CD4-positive, alpha-beta T cell (primary cell): ENCODE measurements at regions of chr11 and their contacts with region 1.

Region 1: GRCh38 chr11:65888163-65888814 is at the start of gene FIBP:
- DNase-seq: peak; percentile 92 to 98 (median 95)
- ATAC-seq: peak; percentile 60
- H3K4me3 ChIP-seq: peak within 1 kb of the TSS; percentile 93
- H3K4me3 Mint-ChIP-seq: peak within 1 kb of the TSS; percentile 87
- H3K27ac ChIP-seq: peak within 1 kb of the TSS; percentile 88 to 91
- H3K27ac Mint-ChIP-seq: peak within 1 kb of the TSS; percentile 95
- H3K4me1 ChIP-seq: peaks cover 68% of the 10 kb centered on the region
- H3K4me1 Mint-ChIP-seq: peaks cover 63% of the 10 kb centered on the region
- H3K27me3 ChIP-seq: no peaks in the 10 kb centered on the region
- H3K27me3 Mint-ChIP-seq: no peaks in the 10 kb centered on the region
- CTCF ChIP-seq: peak; percentile 95
- total RNA-seq, gene FIBP: 19.1 to 19.9 TPM

Region 2: GRCh38 chr11:65711785-65712632 is 176.3 kb before region 1 on chr11 and contains the start of gene KAT5:
- CTCF ChIA-PET with region 1: interaction called, 10 read pairs
- POLR2A ChIA-PET with region 1: interaction called, 34 read pairs
- intact Hi-C with region 1: loop called in 1 of 2 experiments (anchors 10 kb)
- DNase-seq: peak; percentile 95 to 99 (median 96)
- ATAC-seq: peak; percentile 79
- H3K4me3 ChIP-seq: peak within 1 kb of the TSS; percentile 82
- H3K4me3 Mint-ChIP-seq: peak within 1 kb of the TSS; percentile 98
- H3K27ac ChIP-seq: peak within 1 kb of the TSS; percentile 99
- H3K27ac Mint-ChIP-seq: peak within 1 kb of the TSS; percentile 99
- H3K4me1 ChIP-seq: peaks cover 30% of the 10 kb centered on the region
- H3K4me1 Mint-ChIP-seq: peaks cover 23% of the 10 kb centered on the region
- H3K27me3 ChIP-seq: no peaks in the 10 kb centered on the region
- H3K27me3 Mint-ChIP-seq: no peaks in the 10 kb centered on the region
- CTCF ChIP-seq: peak; percentile 98
- total RNA-seq, gene KAT5: 90.9 to 99.6 TPM

Region 3: GRCh38 chr11:65844231-65845190 is 43.8 kb before region 1 on chr11:
- CTCF ChIA-PET with region 1: no interaction called
- POLR2A ChIA-PET with region 1: no interaction called
- intact Hi-C with region 1: no loop called
- DNase-seq: no peak
- ATAC-seq: no peak
- H3K4me3 ChIP-seq: no peak overlapping the region
- H3K4me3 Mint-ChIP-seq: no peak overlapping the region
- H3K27ac ChIP-seq: no peak overlapping the region
- H3K27ac Mint-ChIP-seq: no peak overlapping the region
- H3K4me1 ChIP-seq: no peaks in the 10 kb centered on the region
- H3K4me1 Mint-ChIP-seq: no peaks in the 10 kb centered on the region
- H3K27me3 ChIP-seq: no peaks in the 10 kb centered on the region
- H3K27me3 Mint-ChIP-seq: no peaks in the 10 kb centered on the region
- CTCF ChIP-seq: no peak

Region 4: GRCh38 chr11:65873318-65874156 is 14.8 kb before region 1 on chr11:
- CTCF ChIA-PET with region 1: interaction called, 21 read pairs
- POLR2A ChIA-PET with region 1: interaction called, 36 read pairs
- intact Hi-C with region 1: loop called in 1 of 2 experiments (anchors 2 kb)
- DNase-seq: peak; percentile 92 to 99 (median 96)
- ATAC-seq: peak; percentile 95
- H3K4me3 ChIP-seq: peak overlapping the region; percentile 60
- H3K4me3 Mint-ChIP-seq: peak overlapping the region; percentile 89
- H3K27ac ChIP-seq: peak overlapping the region; percentile 78 to 81
- H3K27ac Mint-ChIP-seq: peak overlapping the region; percentile 83
- H3K4me1 ChIP-seq: peaks cover 51% of the 10 kb centered on the region
- H3K4me1 Mint-ChIP-seq: peaks cover 16% of the 10 kb centered on the region
- H3K27me3 ChIP-seq: no peaks in the 10 kb centered on the region
- H3K27me3 Mint-ChIP-seq: no peaks in the 10 kb centered on the region
- CTCF ChIP-seq: no peak

Region 5: DNA sequence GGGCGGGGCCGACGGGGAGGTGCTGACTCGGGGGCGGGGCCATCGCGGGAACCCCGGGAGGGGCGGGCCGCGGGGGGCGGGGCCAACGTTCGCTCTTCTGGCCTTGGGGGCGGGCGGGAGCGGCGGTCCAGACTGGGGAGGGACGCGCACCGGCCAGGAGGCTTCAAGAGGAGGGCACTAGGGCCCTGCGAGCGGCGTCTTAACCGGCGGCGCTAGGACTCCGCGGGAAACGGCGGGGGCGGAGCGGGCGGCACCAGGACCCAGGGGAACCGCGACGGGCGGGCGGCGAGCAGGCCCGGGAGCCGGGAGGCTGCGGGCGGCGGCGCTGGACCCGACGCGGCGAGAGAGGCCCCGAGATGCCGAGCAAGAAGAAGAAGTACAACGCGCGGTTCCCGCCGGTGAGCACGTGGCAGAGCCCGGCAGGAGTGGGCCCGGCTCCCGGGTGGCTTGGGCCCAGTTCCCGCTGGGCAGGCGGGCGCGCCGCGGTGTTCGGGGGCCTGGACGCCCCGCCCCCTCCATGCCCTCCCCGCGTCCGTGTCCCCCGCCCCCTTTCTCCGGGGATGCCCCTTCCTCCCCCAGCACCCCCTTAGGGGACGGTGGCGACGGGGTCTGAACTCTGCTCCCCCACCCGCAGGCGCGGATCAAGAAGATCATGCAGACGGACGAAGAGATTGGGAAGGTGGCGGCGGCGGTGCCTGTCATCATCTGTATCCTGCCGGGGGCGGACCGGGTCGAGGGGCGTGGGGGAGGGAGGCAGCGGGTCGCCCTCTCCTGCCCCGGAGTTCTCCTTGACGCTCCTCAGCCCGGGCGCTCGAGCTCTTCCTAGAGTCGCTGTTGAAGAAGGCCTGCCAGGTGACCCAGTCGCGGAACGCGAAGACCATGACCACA is 31.1 kb after region 1 on chr11 and contains the start of gene DRAP1:
- CTCF ChIA-PET with region 1: interaction called, 21 read pairs
- POLR2A ChIA-PET with region 1: interaction called, 104 read pairs
- intact Hi-C with region 1: loop called (anchors 1 kb)
- DNase-seq: peak; percentile 97 to 100 (median 99)
- ATAC-seq: peak; percentile 88
- H3K4me3 ChIP-seq: peak within 1 kb of the TSS; percentile 100
- H3K4me3 Mint-ChIP-seq: peak within 1 kb of the TSS; percentile 94
- H3K27ac ChIP-seq: peak within 1 kb of the TSS; percentile 83 to 86
- H3K27ac Mint-ChIP-seq: peak within 1 kb of the TSS; percentile 92
- H3K4me1 ChIP-seq: peaks cover 54% of the 10 kb centered on the region
- H3K4me1 Mint-ChIP-seq: peaks cover 47% of the 10 kb centered on the region
- H3K27me3 ChIP-seq: no peaks in the 10 kb centered on the region
- H3K27me3 Mint-ChIP-seq: no peaks in the 10 kb centered on the region
- CTCF ChIP-seq: no peak
- total RNA-seq, gene DRAP1: 58.6 to 59.1 TPM

Region 6: GRCh38 chr11:65988791-65989592 is 100.7 kb after region 1 on chr11:
- CTCF ChIA-PET with region 1: interaction called, 17 read pairs
- POLR2A ChIA-PET with region 1: interaction called, 6 read pairs
- intact Hi-C with region 1: loop called (anchors 1 kb)
- DNase-seq: peak; percentile 82 to 96 (median 89)
- ATAC-seq: peak; percentile 98
- H3K4me3 ChIP-seq: no peak overlapping the region
- H3K4me3 Mint-ChIP-seq: no peak overlapping the region
- H3K27ac ChIP-seq: no peak overlapping the region
- H3K27ac Mint-ChIP-seq: peak overlapping the region; percentile 61
- H3K4me1 ChIP-seq: peaks cover 10% of the 10 kb centered on the region
- H3K4me1 Mint-ChIP-seq: peaks cover 6% of the 10 kb centered on the region
- H3K27me3 ChIP-seq: no peaks in the 10 kb centered on the region
- H3K27me3 Mint-ChIP-seq: no peaks in the 10 kb centered on the region
- CTCF ChIP-seq: peak; percentile 96

Region 7: GRCh38 chr11:66157179-66157864 is 269.0 kb after region 1 on chr11:
- CTCF ChIA-PET with region 1: no interaction called
- POLR2A ChIA-PET with region 1: no interaction called
- intact Hi-C with region 1: no loop called
- DNase-seq: no peak
- ATAC-seq: no peak
- H3K4me3 ChIP-seq: no peak overlapping the region
- H3K4me3 Mint-ChIP-seq: no peak overlapping the region
- H3K27ac ChIP-seq: no peak overlapping the region
- H3K27ac Mint-ChIP-seq: peak overlapping the region; percentile 52
- H3K4me1 ChIP-seq: peaks cover 15% of the 10 kb centered on the region
- H3K4me1 Mint-ChIP-seq: peaks cover 63% of the 10 kb centered on the region
- H3K27me3 ChIP-seq: no peaks in the 10 kb centered on the region
- H3K27me3 Mint-ChIP-seq: no peaks in the 10 kb centered on the region
- CTCF ChIP-seq: no peak